CD4-positive, alpha-beta memory T cell (primary cell): ENCODE measurements at regions of chr3 and their contacts with region 1.

Region 1: DNA sequence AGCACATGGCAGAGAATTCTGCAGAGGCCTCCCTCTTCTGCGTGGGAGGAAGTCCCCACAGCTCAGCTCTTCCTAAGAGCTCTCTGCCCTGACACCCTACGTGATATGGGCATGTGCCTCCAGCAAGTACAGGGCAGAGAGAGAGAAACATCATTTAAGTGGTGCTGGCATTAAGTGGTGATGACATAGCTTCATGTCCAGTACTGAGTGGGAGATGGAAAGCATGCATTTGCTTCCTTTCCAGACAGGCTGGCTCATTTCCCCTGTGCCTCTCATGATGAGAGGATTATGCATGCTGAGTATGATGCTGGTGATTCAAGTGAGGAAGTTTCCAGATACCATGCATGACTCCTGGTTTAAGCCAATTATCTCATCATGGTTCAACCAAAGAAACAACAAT is 26.9 kb downstream of the BFSP2 start:
- DNase-seq: no peak
- H3K4me3 ChIP-seq: no peak overlapping the region
- H3K4me3 Mint-ChIP-seq: no peak overlapping the region
- H3K27ac ChIP-seq: no peak overlapping the region
- H3K27ac Mint-ChIP-seq: no peak overlapping the region
- H3K4me1 ChIP-seq: peaks cover 4% of the 10 kb centered on the region
- H3K4me1 Mint-ChIP-seq: peaks cover 0 to 9% (median 3%) of the 10 kb centered on the region in 4 donors
- H3K27me3 ChIP-seq: no peaks in the 10 kb centered on the region
- H3K27me3 Mint-ChIP-seq: peaks cover 2 to 10% of the 10 kb centered on the region in 2 donors

Region 2: GRCh38 chr3:131620977-131621376 is 1805.7 kb before region 1 on chr3:
- CTCF ChIA-PET with region 1: no interaction called
- POLR2A ChIA-PET with region 1: no interaction called
- intact Hi-C with region 1: no loop called
- DNase-seq: no peak
- H3K4me3 ChIP-seq: no peak overlapping the region
- H3K4me3 Mint-ChIP-seq: no peak overlapping the region
- H3K27ac ChIP-seq: no peak overlapping the region
- H3K27ac Mint-ChIP-seq: no peak overlapping the region
- H3K4me1 ChIP-seq: no peaks in the 10 kb centered on the region
- H3K4me1 Mint-ChIP-seq: no peaks in the 10 kb centered on the region
- H3K27me3 ChIP-seq: no peaks in the 10 kb centered on the region
- H3K27me3 Mint-ChIP-seq: peaks cover 7 to 11% of the 10 kb centered on the region in 2 donors

Region 3: GRCh38 chr3:132730891-132731580 is 695.7 kb before region 1 on chr3:
- CTCF ChIA-PET with region 1: interaction called, 145 read pairs
- POLR2A ChIA-PET with region 1: interaction called, 5 read pairs
- intact Hi-C with region 1: loop called (anchors 1 kb)
- DNase-seq: peak in 1 of 5 donors; percentile 5
- H3K4me3 ChIP-seq: no peak overlapping the region
- H3K4me3 Mint-ChIP-seq: no peak overlapping the region
- H3K27ac ChIP-seq: no peak overlapping the region
- H3K27ac Mint-ChIP-seq: no peak overlapping the region
- H3K4me1 ChIP-seq: no peaks in the 10 kb centered on the region
- H3K4me1 Mint-ChIP-seq: peaks cover 0 to 3% (median 1%) of the 10 kb centered on the region in 4 donors
- H3K27me3 ChIP-seq: no peaks in the 10 kb centered on the region
- H3K27me3 Mint-ChIP-seq: peaks cover 11 to 22% of the 10 kb centered on the region in 2 donors

Region 4: DNA sequence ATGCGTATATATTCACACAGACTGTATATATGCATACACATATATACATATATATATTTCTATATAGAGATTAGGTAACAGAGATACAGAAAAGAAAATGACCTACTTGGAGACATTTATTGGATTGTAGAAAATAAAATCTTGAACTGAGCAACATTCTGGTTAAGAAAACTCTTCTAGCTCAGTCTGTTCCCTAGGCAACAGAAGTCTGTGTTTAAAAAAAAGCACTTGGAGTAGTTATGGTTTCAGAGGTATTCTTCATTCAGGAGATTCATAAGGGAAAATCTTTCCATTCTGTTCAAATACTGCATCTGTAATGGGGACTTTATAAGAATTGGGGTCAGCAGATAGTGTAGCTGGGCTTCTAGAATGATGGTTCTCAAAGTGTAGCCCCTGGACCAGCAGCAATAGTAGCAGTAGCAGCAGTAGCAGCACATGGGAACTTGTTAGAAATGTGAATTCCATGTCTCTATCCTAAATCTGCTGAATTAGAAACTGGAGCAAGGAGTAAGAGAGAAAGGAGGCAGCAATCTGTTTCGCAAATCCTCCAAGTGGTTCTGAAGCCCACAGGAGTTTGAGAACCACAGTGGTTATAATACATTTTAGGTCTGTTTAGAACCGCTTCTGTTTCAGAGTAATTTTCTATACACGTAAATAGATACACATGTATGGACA is 501.3 kb before region 1 on chr3:
- CTCF ChIA-PET with region 1: no interaction called
- POLR2A ChIA-PET with region 1: no interaction called
- intact Hi-C with region 1: no loop called
- DNase-seq: no peak
- H3K4me3 ChIP-seq: no peak overlapping the region
- H3K4me3 Mint-ChIP-seq: no peak overlapping the region
- H3K27ac ChIP-seq: no peak overlapping the region
- H3K27ac Mint-ChIP-seq: no peak overlapping the region
- H3K4me1 ChIP-seq: no peaks in the 10 kb centered on the region
- H3K4me1 Mint-ChIP-seq: no peaks in the 10 kb centered on the region
- H3K27me3 ChIP-seq: no peaks in the 10 kb centered on the region
- H3K27me3 Mint-ChIP-seq: peaks cover 0 to 2% of the 10 kb centered on the region in 2 donors

Region 5: DNA sequence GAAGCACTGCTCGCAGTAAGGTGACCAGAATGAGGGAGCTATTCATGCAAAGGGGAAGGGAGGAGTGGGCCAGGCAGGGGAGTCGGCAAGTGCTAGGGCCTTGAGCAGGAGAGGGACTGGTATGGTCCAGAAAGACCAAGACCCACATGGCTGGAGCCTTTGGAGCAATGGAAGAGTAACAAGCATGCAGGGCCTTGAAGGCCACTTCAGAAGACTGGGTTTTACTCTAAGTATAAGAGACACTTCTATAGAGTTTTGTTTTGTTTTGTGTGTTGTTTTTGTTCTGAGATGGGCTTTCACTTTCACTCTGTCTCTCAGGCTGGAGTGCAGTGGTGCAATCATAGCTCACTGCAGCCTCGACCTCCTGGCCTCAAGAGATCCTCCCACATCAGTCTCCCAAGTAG is 15.1 kb after region 1 on chr3:
- CTCF ChIA-PET with region 1: interaction called, 12 read pairs
- POLR2A ChIA-PET with region 1: no interaction called
- intact Hi-C with region 1: no loop called
- DNase-seq: peak in 2 of 5 donors; percentile 17 to 20
- H3K4me3 ChIP-seq: peak overlapping the region; percentile 24 to 41
- H3K4me3 Mint-ChIP-seq: peak overlapping the region; percentile 74 to 96 (median 86)
- H3K27ac ChIP-seq: peak overlapping the region; percentile 34
- H3K27ac Mint-ChIP-seq: peak overlapping the region; percentile 71 to 97 (median 96)
- H3K4me1 ChIP-seq: peaks cover 26% of the 10 kb centered on the region
- H3K4me1 Mint-ChIP-seq: peaks cover 22 to 40% (median 33%) of the 10 kb centered on the region in 4 donors
- H3K27me3 ChIP-seq: no peaks in the 10 kb centered on the region
- H3K27me3 Mint-ChIP-seq: no peaks in the 10 kb centered on the region

Region 6: GRCh38 chr3:133479895-133480669 is 53.4 kb after region 1 on chr3:
- CTCF ChIA-PET with region 1: no interaction called
- POLR2A ChIA-PET with region 1: no interaction called
- intact Hi-C with region 1: no loop called
- DNase-seq: no peak
- H3K4me3 ChIP-seq: no peak overlapping the region
- H3K4me3 Mint-ChIP-seq: no peak overlapping the region
- H3K27ac ChIP-seq: no peak overlapping the region
- H3K27ac Mint-ChIP-seq: peak overlapping the region in 1 of 7 donors; percentile 11
- H3K4me1 ChIP-seq: peaks cover 17% of the 10 kb centered on the region
- H3K4me1 Mint-ChIP-seq: peaks cover 18 to 22% (median 20%) of the 10 kb centered on the region in 4 donors
- H3K27me3 ChIP-seq: no peaks in the 10 kb centered on the region
- H3K27me3 Mint-ChIP-seq: no peaks in the 10 kb centered on the region